ENCODE measurements at regions of chr2 and their contacts with region 1.

Region 1: DNA sequence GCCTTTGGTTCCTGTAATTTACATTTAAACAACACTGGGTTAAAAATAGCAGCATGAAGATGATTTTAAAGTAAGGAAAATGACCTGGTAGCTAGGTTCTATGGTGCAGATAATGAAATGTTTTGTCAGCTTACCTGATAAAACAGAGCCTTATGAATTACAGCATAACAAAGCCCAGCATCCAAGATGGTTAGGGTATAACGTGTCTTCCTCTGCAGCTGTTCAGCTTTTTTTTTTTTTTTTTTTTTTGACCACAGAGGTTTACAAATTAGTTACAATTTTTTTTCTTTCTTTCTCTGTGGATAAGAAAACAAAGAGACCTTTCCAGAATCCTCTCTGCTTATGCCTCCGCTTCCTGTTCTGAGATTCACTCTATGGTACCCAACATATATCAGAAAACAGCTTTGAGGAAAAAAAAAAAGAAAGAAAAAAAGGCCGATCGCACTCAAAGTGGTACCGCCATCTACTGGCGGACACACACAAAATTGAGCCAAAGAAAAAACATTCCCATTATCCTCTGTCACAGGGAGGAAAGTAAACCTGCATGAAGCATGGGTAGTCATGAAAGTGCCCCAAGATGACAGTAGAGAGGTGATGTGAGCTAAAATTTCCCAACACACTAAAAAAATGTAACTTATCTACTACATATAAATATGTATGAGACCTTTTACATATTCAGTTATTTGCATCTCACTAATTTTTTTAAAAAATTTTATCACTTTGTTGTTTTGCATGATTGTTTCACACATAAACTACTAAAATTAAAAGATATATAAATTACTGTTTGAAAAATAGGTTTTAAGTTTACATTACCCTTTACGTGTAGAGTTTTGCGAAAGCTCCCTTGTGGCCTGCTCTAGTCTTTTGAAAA is at the start of gene SCN3A:
- DNase-seq: peak; percentile 54
- ATAC-seq: peak; percentile 83
- H3K4me3 ChIP-seq: no peak within 1 kb of the TSS
- H3K27ac ChIP-seq: no peak within 1 kb of the TSS
- H3K4me1 ChIP-seq: no peaks in the 10 kb centered on the region
- H3K27me3 ChIP-seq: no peaks in the 10 kb centered on the region
- CTCF ChIP-seq: peak; percentile 85
- EP300 ChIP-seq: no peak
- POLR2A ChIP-seq: no peak
- RAD21 ChIP-seq: 0 out of 2 replicates have a peak, but pooled peaks have one; percentile 23
- total RNA-seq, gene SCN3A: not detected in 2 replicates

Region 2: DNA sequence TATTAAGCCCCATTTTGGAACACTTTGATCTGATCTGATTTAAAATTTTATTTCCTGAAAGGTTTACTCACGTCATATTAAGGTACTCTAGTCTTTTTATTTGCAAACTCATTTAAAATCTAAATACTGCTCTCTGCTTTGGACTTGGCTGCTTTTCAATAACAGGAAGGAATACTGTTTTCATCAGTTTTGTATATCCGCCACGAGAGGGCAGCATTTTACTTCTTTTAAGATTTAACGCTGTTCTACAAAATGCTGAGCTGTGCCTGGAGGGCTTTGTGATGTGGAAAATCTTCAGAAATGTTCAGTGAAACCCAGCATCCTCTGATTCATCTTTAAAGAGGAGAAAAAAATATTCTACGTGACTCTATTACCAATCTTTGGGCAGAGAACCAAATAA is 211.1 kb before region 1 on chr2:
- CTCF ChIA-PET with region 1: interaction called, 3 read pairs
- POLR2A ChIA-PET with region 1: no interaction called
- in situ Hi-C with region 1: no loop called
- intact Hi-C with region 1: loop called (anchors 1 kb)
- DNase-seq: peak; percentile 80
- ATAC-seq: peak; percentile 84
- H3K4me3 ChIP-seq: no peak overlapping the region
- H3K27ac ChIP-seq: no peak overlapping the region
- H3K4me1 ChIP-seq: no peaks in the 10 kb centered on the region
- H3K27me3 ChIP-seq: no peaks in the 10 kb centered on the region
- CTCF ChIP-seq: peak; percentile 73
- EP300 ChIP-seq: no peak
- POLR2A ChIP-seq: no peak
- RAD21 ChIP-seq: 0 out of 2 replicates have a peak, but pooled peaks have one; percentile 20

Region 3: GRCh38 chr2:165015052-165015642 is 188.8 kb before region 1 on chr2:
- CTCF ChIA-PET with region 1: interaction called, 109 read pairs
- POLR2A ChIA-PET with region 1: no interaction called
- in situ Hi-C with region 1: loop called (anchors 5 kb)
- intact Hi-C with region 1: loop called (anchors 1 kb)
- DNase-seq: peak; percentile 68
- ATAC-seq: peak; percentile 95
- H3K4me3 ChIP-seq: no peak overlapping the region
- H3K27ac ChIP-seq: no peak overlapping the region
- H3K4me1 ChIP-seq: 0 out of 2 replicates have a peak, but pooled peaks cover 8% of the 10 kb centered on the region
- H3K27me3 ChIP-seq: no peaks in the 10 kb centered on the region
- CTCF ChIP-seq: peak; percentile 95
- EP300 ChIP-seq: no peak
- POLR2A ChIP-seq: no peak
- RAD21 ChIP-seq: peak; percentile 77

Region 4: GRCh38 chr2:165022781-165023180 is 181.1 kb before region 1 on chr2:
- CTCF ChIA-PET with region 1: interaction called, 109 read pairs
- POLR2A ChIA-PET with region 1: no interaction called
- in situ Hi-C with region 1: loop called (anchors 5 kb)
- intact Hi-C with region 1: no loop called
- DNase-seq: no peak
- ATAC-seq: no peak; the same call in 2 of the 3 replicates
- H3K4me3 ChIP-seq: no peak overlapping the region
- H3K27ac ChIP-seq: no peak overlapping the region
- H3K4me1 ChIP-seq: no peaks in the 10 kb centered on the region
- H3K27me3 ChIP-seq: no peaks in the 10 kb centered on the region
- CTCF ChIP-seq: no peak
- EP300 ChIP-seq: no peak
- POLR2A ChIP-seq: no peak
- RAD21 ChIP-seq: no peak

Measured in HepG2 (cell line).